Ascending aorta (tissue), 2 donors: ENCODE measurements at regions of chr10 and their contacts with region 1.

Region 1: GRCh38 chr10:29841724-29842649 is 207.2 kb upstream of the SVIL start:
- DNase-seq: peak; percentile 49 to 87
- H3K4me3 ChIP-seq: no peak overlapping the region
- H3K27ac ChIP-seq: peak overlapping the region; percentile 43 to 61
- H3K4me1 ChIP-seq: peaks cover 7 to 16% of the 10 kb centered on the region in 2 donors
- H3K27me3 ChIP-seq: no peaks in the 10 kb centered on the region
- CTCF ChIP-seq: no peak

Region 2: DNA sequence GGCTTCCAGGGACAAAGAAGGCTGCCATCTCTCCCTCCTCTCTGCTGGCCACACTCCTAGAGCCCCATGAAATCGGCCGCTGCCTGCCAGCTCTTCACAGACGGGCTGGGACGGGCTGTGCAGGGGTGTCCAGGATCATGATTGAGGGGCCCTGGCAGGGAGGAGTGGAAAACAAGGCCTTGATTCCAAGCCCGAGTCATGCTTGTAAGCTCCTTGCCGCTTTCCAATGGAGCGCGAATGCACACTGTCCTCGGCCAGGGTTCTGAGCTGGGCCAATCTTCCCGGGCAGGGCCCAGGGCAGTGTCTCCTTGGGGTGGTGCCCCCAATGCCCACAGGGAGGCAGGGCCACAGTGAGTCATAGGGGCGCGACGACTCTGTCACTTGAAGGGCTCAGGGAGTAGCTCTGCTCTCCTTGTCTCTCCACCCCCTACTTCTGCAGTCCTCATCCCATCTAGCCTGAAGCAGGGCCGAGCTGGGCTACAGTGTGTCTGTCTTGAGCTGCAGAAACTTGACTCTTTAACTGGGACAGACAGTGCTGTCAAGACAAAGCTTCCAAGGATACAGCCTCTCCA is 21.0 kb before region 1 on chr10:
- intact Hi-C with region 1: loop called (anchors 2 kb)
- DNase-seq: no peak
- H3K4me3 ChIP-seq: peak overlapping the region in 1 of 2 donors; percentile 25
- H3K27ac ChIP-seq: peak overlapping the region; percentile 67 to 75
- H3K4me1 ChIP-seq: peaks cover 4 to 11% of the 10 kb centered on the region in 2 donors
- H3K27me3 ChIP-seq: no peaks in the 10 kb centered on the region
- CTCF ChIP-seq: no peak